ENCODE measurements at regions of chr15 and their contacts with region 1.

Region 1: DNA sequence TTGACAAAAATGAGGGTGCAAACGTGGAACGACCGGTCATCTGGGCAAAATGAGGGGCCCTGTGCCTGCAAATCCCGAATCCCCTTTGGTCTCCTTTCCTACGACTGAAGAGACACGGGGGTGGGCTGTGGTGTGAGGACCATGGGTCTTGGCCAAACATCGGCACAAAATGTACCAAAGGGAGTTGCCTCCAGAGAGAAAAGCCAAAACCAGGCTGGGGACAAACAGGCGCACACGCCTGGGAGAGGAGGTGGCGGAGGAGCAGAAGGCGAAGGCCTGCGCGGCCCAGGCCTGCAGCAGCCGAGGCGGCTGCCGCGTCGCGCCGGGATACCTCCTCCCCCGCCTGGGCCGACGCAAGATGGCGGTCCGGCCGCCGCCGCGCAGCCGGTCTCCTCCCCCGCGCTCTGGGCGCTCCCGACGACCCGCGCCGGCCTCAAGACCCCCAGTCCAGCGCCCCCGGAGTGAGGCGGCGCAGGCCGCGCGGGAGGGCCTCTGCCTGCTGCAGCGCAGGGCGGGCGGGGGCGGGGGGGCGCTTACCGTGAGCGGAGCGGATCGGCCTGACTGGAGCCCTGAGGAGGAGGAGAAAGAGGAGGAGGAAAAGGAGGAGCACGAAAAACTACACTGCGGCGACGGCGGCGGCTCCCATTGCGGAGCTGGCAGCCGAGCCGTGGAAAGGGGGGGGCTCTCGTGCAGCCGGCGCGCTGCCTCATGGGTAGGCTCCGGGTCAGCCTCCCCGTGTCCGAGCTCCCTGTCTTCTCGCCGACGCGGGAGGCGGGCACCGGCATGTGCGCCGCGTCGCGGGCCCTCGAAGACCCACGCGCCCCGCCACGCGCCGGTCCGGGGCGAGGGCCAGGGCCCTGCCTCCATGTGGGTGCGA is at the start of gene ZNF280D:
- DNase-seq: peak; percentile 92 to 96 (median 93)
- H3K4me3 ChIP-seq: peak within 1 kb of the TSS; percentile 1 to 81 (median 41)
- H3K27ac ChIP-seq: peak within 1 kb of the TSS; percentile 81 to 100 (median 99)
- H3K4me1 ChIP-seq: peaks cover 25 to 49% of the 10 kb centered on the region in 2 donors
- H3K27me3 ChIP-seq: no peaks in the 10 kb centered on the region
- CTCF ChIP-seq: no peak
- POLR2A ChIP-seq: peak; percentile 57 to 81
- total RNA-seq, gene ZNF280D: 16.9 to 67.5 (median 50.3) TPM

Region 2: DNA sequence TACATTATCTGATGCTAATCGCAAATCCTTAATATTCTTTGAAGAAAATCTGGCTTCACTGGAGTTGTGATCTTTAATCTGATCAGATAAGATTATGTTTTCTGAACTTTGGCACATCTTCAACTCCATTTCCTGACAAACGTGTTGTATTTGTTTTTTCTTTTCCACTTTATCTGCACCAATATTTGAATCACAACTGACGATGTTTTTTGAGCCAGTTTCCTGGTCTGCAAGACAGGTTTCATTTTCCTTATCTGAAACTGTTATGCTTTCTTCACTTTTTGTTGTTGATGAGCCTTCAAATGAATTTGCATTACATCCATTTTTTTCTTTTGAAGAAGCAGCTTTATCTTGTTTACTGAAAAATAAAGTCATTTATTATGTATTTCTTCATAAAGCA is 101.4 kb before region 1 on chr15:
- intact Hi-C with region 1: loop called in 1 of 2 experiments (anchors 10 kb)
- DNase-seq: no peak
- H3K4me3 ChIP-seq: no peak overlapping the region
- H3K27ac ChIP-seq: no peak overlapping the region
- H3K4me1 ChIP-seq: peaks cover 0 to 5% of the 10 kb centered on the region in 2 donors
- H3K27me3 ChIP-seq: no peaks in the 10 kb centered on the region
- CTCF ChIP-seq: no peak
- POLR2A ChIP-seq: no peak

Region 3: DNA sequence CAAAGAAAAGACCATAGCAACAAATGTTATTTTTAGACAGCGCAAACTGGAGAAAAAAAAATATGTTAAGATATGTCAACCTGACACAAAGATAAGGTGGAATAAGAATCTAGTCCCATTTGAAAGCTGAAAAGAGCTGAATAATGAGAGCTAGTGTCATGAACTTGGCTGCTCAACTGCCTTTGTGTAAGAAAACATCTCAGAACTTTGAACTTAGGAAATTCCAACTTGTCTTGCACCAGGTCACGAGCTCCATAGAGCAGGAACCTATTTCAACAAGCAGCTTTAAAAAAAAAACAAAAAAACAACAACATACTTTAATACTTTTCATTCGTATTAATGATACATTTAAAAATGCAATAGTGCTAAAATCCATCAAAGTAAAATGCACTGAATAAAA is 79.4 kb before region 1 on chr15:
- intact Hi-C with region 1: no loop called
- DNase-seq: no peak
- H3K4me3 ChIP-seq: no peak overlapping the region
- H3K27ac ChIP-seq: peak overlapping the region in 1 of 5 donors; percentile 20
- H3K4me1 ChIP-seq: no peaks in the 10 kb centered on the region
- H3K27me3 ChIP-seq: no peaks in the 10 kb centered on the region
- CTCF ChIP-seq: no peak
- POLR2A ChIP-seq: no peak